ENCODE measurements at regions of chr10 and their contacts with region 1.

Region 1: GRCh38 chr10:22436884-22437619 is 91.8 kb downstream of the SPAG6 start:
- DNase-seq: peak; percentile 80
- H3K4me3 ChIP-seq: peak overlapping the region; percentile 72
- H3K27ac ChIP-seq: peak overlapping the region; percentile 94 to 97
- H3K4me1 ChIP-seq: no peaks in the 10 kb centered on the region
- H3K27me3 ChIP-seq: no peaks in the 10 kb centered on the region
- CTCF ChIP-seq: no peak
- POLR2A ChIP-seq: peak; percentile 47

Region 2: GRCh38 chr10:22003079-22003913 is 433.8 kb before region 1 on chr10 and contains the start of gene DNAJC1:
- intact Hi-C with region 1: loop called (anchors 5 kb)
- DNase-seq: peak; percentile 98
- H3K4me3 ChIP-seq: peak within 1 kb of the TSS; percentile 81 to 91
- H3K27ac ChIP-seq: peak within 1 kb of the TSS; percentile 95 to 96
- H3K4me1 ChIP-seq: no peaks in the 10 kb centered on the region
- H3K27me3 ChIP-seq: no peaks in the 10 kb centered on the region
- CTCF ChIP-seq: peak in 2 of 4 experiments; percentile 25 to 34
- POLR2A ChIP-seq: peak; percentile 98
- total RNA-seq, gene DNAJC1: 62.8 to 89.3 TPM

Region 3: DNA sequence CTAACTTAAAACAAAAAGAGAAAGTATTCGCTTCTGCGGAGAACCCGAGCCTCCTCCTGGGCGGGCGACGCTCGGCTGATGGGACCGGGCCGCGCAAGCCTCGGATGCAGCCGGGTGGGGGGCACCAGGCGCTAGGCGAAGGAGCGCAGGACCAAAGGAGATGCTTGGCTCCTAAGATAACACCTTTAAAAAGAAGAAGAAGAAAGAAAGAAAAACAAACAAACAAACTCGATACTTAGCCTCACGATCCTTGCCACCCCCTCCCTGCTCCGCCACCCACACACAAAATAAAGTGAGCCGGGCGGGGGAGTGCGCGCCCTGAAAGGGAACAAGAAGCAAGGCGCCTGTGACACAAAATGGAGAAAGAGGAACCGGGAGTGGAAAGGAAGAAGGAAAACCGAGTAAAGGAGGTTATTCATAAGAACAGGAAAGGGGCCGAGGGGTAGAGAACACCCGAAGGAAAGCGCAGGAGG is 185.3 kb before region 1 on chr10:
- intact Hi-C with region 1: loop called (anchors 10 kb)
- DNase-seq: peak; percentile 54
- H3K4me3 ChIP-seq: peak overlapping the region; percentile 60 to 62
- H3K27ac ChIP-seq: peak overlapping the region; percentile 91 to 92
- H3K4me1 ChIP-seq: no peaks in the 10 kb centered on the region
- H3K27me3 ChIP-seq: no peaks in the 10 kb centered on the region
- CTCF ChIP-seq: peak in 1 of 4 experiments; percentile 2
- POLR2A ChIP-seq: no peak

Region 4: DNA sequence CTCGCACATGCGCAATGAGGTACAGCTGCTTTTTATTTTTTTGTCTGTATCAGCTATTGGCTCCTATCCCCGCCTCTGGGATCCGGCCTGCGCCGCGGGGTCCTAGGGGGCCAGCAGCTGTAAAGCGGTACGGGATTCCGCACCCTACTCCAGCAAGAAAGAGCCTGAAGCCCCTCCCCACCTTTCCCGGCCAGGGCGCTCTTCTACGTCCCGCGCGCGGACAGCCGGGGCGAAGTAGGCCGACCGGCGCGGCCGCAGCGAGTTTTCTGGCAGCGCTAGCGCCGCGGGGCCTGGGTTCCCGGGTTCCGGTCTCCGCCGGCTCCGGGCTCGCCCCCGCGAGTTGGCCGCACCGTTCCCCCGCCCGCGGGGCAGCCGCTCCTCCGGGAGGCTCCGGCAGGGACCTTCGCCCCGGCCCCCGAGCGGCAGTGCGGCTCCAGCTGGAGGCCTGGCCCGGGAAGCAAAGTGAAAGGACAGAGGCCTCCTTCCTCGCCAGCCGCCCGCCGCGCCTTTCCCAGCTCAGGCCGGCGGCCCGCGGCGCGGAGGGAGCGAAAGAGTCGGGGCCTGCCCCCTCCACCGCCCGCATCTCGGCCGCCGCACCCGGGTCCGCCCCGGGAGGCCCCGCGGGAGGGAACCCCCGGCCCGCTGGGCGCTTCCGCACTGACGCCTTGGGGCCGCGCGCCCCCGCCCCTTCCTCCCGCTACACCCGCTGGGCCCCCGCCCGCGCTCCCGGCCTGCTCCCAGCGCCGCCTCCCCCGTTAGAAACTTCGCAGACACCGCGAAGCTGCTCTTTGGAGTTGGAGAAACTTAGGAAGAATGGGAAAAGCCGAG is 96.5 kb before region 1 on chr10:
- intact Hi-C with region 1: loop called (anchors 10 kb)
- DNase-seq: peak; percentile 53
- H3K4me3 ChIP-seq: peak overlapping the region; percentile 76 to 84
- H3K27ac ChIP-seq: peak overlapping the region; percentile 92 to 96
- H3K4me1 ChIP-seq: peaks cover 9% of the 10 kb centered on the region
- H3K27me3 ChIP-seq: peaks cover 27% of the 10 kb centered on the region
- CTCF ChIP-seq: no peak
- POLR2A ChIP-seq: peak; percentile 13

Region 5: GRCh38 chr10:22550732-22551131 is 113.7 kb after region 1 on chr10:
- intact Hi-C with region 1: loop called (anchors 5 kb)
- DNase-seq: no peak
- H3K4me3 ChIP-seq: no peak overlapping the region
- H3K27ac ChIP-seq: no peak overlapping the region
- H3K4me1 ChIP-seq: no peaks in the 10 kb centered on the region
- H3K27me3 ChIP-seq: no peaks in the 10 kb centered on the region
- CTCF ChIP-seq: peak in 3 of 4 experiments; percentile 11 to 26 (median 21)
- POLR2A ChIP-seq: no peak

Measured in prostate gland (tissue), 2 donors.